Activated naive CD4-positive, alpha-beta T cell treated with anti-CD3 and anti-CD28 coated beads for 36 hours (primary cell): ENCODE measurements at regions of chr11 and their contacts with region 1.

Region 1: GRCh38 chr11:117092951-117093590 is 5.2 kb downstream of the SIK3 start:
- DNase-seq: no peak
- H3K4me3 Mint-ChIP-seq: no peak overlapping the region
- H3K27ac Mint-ChIP-seq: peak overlapping the region; percentile 60
- H3K4me1 Mint-ChIP-seq: peaks cover 76% of the 10 kb centered on the region
- H3K27me3 Mint-ChIP-seq: no peaks in the 10 kb centered on the region

Region 2: GRCh38 chr11:117052196-117053149 is 40.6 kb before region 1 on chr11:
- CTCF ChIA-PET with region 1: no interaction called
- intact Hi-C with region 1: loop called (anchors 5 kb)
- DNase-seq: no peak
- H3K4me3 Mint-ChIP-seq: no peak overlapping the region
- H3K27ac Mint-ChIP-seq: no peak overlapping the region
- H3K4me1 Mint-ChIP-seq: peaks cover 6% of the 10 kb centered on the region
- H3K27me3 Mint-ChIP-seq: no peaks in the 10 kb centered on the region

Region 3: DNA sequence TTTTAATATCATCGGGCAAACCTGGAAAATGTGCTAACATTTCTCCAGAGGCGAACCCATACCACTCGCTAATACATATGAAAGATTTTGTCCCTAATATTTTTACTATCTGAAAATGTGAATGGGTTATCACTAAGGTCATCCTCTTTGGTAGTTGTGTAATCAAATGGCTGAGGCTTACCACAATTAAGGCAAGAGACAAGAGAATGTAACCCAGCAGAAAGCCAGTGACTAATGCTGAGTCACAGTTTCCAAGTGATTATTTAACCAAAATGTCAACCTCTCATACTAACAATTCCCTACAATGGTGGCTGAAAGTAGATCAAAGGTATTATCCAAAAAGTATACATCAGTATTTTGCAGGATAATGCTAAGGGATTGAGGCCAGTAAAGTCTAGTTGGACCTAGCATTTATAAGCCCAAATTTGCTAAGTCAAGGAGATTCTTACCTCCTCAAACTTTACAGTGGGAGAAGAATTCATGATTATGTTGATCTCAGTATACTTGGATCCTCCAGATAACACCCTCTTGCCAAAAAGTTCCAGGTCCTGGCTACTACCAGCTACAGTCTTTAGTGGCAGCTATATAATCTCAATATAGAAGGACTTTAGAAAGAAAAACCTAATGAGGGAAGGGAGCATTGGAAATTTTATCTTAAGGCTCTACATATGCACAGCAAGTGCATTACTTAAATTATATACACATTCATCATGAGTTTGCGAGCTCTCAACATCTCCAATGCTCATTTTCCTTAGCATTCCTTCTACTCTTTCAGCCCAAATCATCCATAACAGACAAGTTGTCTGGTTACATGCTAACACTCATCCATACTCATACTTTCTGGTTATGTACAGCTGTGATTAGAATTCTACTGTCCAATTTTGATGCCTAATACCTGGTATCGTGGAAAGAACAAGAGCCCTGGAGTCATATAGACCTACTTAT is 20.3 kb before region 1 on chr11:
- CTCF ChIA-PET with region 1: interaction called, 3 read pairs
- intact Hi-C with region 1: loop called (anchors 1 kb)
- DNase-seq: no peak
- H3K4me3 Mint-ChIP-seq: no peak overlapping the region
- H3K27ac Mint-ChIP-seq: peak overlapping the region; percentile 30
- H3K4me1 Mint-ChIP-seq: peaks cover 63% of the 10 kb centered on the region
- H3K27me3 Mint-ChIP-seq: no peaks in the 10 kb centered on the region

Region 4: GRCh38 chr11:117366248-117366647 is 273.2 kb after region 1 on chr11:
- CTCF ChIA-PET with region 1: no interaction called
- intact Hi-C with region 1: no loop called
- DNase-seq: no peak
- H3K4me3 Mint-ChIP-seq: no peak overlapping the region
- H3K27ac Mint-ChIP-seq: no peak overlapping the region
- H3K4me1 Mint-ChIP-seq: no peaks in the 10 kb centered on the region
- H3K27me3 Mint-ChIP-seq: no peaks in the 10 kb centered on the region